AG04449 (cell line): ENCODE measurements at regions of chr11 and their contacts with region 1.

Region 1: GRCh38 chr11:57324886-57325734 is at the start of gene TNKS1BP1:
- DNase-seq: peak; percentile 88
- H3K4me3 ChIP-seq: peak within 1 kb of the TSS; percentile 90
- CTCF ChIP-seq: no peak

Region 2: DNA sequence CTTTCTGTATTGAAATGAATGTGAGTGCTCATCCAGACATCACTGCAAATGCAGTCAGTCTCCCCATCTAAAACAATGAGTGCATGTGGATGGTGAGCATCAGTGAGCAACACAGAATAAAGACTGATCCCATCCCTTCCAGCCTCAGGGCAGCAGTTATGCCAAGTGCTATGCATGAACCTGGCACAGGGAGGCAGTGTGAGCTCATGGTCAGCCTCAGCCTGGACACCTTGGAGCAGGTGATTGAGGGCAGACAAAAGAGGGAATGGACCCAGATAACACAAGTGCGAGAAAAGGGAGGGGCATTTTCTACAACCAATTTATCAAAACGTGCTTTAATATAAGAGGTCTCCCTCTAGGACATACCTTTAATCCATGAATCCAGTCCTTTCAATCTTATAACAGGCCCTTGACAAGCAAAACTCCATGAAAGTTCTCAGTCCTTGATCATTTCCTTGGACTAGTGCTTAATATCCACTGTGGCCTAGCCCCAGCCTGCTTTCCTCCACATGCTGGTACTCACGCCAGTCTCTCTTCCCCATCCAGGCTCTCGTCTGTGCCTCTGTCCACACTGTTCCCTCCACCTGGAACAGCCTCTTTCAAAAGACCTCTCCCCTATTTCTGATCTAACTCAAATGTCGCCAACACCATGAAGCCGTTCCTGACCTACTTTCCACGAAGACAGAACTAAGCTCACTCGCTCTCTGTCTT is 193.9 kb before region 1 on chr11:
- CTCF ChIA-PET with region 1: no interaction called
- POLR2A ChIA-PET with region 1: no interaction called
- DNase-seq: no peak
- H3K4me3 ChIP-seq: no peak overlapping the region
- CTCF ChIP-seq: peak; percentile 76

Region 3: GRCh38 chr11:57335343-57336110 is 10.4 kb after region 1 on chr11 and contains the start of gene SSRP1:
- CTCF ChIA-PET with region 1: interaction called, 5 read pairs
- POLR2A ChIA-PET with region 1: interaction called, 20 read pairs
- DNase-seq: no peak
- H3K4me3 ChIP-seq: peak within 1 kb of the TSS; percentile 78
- CTCF ChIP-seq: no peak